Esophagus muscularis mucosa (tissue), 4 donors: ENCODE measurements at regions of chr6 and their contacts with region 1.

Region 1: DNA sequence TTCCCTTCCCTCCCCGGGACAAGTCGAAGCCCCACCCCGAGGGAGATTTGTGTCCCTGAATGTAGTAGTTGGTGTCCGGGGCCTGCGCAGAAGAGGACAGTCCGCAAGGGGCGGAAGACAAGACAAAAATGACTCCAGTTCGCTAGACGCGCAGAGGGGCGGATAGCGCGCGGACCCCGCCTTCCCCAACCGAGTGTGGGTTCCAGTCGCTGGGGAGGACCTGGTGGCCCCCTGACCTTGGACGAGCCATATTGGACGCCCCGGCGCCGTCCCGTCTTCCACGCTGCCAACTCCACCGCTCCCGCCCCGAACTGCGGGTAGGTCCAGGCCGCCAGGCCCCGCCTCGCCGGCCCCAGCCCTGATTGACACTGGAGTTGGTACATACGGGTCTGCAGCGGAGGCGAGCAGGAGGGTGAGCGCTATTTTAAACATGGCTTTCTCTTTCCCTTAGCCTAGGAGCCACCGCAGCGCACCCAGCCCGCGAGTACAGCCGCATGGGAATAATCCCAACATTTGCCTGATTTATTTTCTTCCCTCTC is 802 bp downstream of the HMGN3 start:
- DNase-seq: peak; percentile 97
- H3K4me3 ChIP-seq: peak overlapping the region; percentile 72 to 96 (median 78)
- H3K27ac ChIP-seq: peak overlapping the region; percentile 91 to 95 (median 94)
- H3K4me1 ChIP-seq: peaks cover under 1 to 26% (median 21%) of the 10 kb centered on the region in 4 donors
- H3K27me3 ChIP-seq: no peaks in the 10 kb centered on the region
- CTCF ChIP-seq: peak in 1 of 3 experiments; percentile 57
- EP300 ChIP-seq: no peak
- POLR2A ChIP-seq: no peak

Region 2: DNA sequence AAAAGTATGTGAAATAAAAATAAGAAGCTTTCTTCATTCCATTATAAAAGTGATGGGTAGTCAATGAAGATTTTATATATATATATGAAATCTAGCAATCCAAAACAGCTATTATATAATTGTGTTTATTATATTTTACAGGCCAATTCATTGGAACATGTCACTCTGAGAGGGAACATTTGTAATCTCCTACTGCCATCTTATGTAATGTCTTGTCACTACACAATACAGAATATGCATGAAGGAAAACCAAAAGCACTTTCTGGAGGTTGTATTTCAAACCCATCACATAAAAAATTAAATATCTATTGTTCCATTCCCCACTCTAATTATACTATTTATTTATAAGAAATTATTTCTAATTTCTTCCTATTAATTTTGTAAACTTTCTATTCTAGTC is 397.9 kb before region 1 on chr6:
- intact Hi-C with region 1: no loop called
- DNase-seq: no peak
- H3K4me3 ChIP-seq: no peak overlapping the region
- H3K27ac ChIP-seq: no peak overlapping the region
- H3K4me1 ChIP-seq: peaks cover 0 to 4% (median 0%) of the 10 kb centered on the region in 4 donors
- H3K27me3 ChIP-seq: no peaks in the 10 kb centered on the region
- CTCF ChIP-seq: peak in 1 of 3 experiments; percentile 6
- EP300 ChIP-seq: no peak
- POLR2A ChIP-seq: no peak

Region 3: GRCh38 chr6:79078075-79079025 is 155.3 kb before region 1 on chr6 and contains the start of gene PHIP:
- intact Hi-C with region 1: loop called (anchors 1 kb)
- DNase-seq: peak; percentile 98
- H3K4me3 ChIP-seq: peak within 1 kb of the TSS; percentile 84 to 98 (median 94)
- H3K27ac ChIP-seq: peak within 1 kb of the TSS; percentile 96 to 100 (median 98)
- H3K4me1 ChIP-seq: peaks cover 28 to 43% (median 40%) of the 10 kb centered on the region in 4 donors
- H3K27me3 ChIP-seq: no peaks in the 10 kb centered on the region
- CTCF ChIP-seq: no peak
- EP300 ChIP-seq: no peak
- POLR2A ChIP-seq: peak; percentile 24
- total RNA-seq, gene PHIP: 20.1 to 32.4 (median 25.5) TPM

Region 4: GRCh38 chr6:79536954-79537747 is 303.5 kb after region 1 on chr6 and contains the start of gene LCA5:
- intact Hi-C with region 1: loop called (anchors 5 kb)
- DNase-seq: peak; percentile 97
- H3K4me3 ChIP-seq: peak within 1 kb of the TSS; percentile 66 to 88 (median 78)
- H3K27ac ChIP-seq: peak within 1 kb of the TSS; percentile 90 to 95 (median 93)
- H3K4me1 ChIP-seq: peaks cover 8 to 36% (median 19%) of the 10 kb centered on the region in 4 donors
- H3K27me3 ChIP-seq: no peaks in the 10 kb centered on the region
- CTCF ChIP-seq: no peak
- EP300 ChIP-seq: no peak
- POLR2A ChIP-seq: no peak
- total RNA-seq, gene LCA5: 5.2 to 11.5 (median 8.5) TPM

Region 5: DNA sequence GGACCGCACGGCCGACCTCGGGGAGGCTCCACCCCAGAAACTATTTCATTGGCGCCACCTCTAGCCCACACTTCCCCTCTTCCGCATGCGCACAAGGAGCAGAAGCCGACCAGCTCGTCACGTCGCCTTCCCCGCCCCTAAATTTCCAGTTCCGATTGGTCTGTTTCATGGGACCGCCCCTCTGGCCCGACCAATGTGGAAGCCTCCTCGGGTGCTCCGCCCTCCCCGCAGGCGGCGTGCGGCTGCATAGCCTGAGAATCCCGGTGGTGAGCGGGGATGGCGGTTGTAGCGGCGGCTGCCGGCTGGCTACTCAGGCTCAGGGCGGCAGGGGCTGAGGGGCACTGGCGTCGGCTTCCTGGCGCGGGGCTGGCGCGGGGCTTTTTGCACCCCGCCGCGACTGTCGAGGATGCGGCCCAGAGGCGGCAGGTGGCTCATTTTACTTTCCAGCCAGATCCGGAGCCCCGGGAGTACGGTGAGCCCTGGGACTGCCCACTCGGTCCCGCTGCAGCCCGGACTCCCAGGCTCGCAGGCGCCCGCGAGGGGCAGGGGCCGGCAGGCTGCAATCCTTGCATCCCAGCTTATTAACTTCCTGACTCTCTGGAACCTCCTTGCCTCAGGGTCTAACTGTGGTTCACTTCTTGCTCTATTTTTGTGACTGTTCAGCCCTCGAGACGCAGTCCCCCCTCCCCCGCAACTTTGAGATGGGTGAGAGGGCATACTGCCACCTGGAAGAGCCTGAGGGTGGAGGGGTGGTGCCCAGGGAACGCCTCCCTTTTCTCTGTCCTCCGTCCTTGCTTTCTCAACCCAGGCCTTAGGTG is 872.9 kb after region 1 on chr6 and contains the start of gene BCKDHB:
- intact Hi-C with region 1: loop called (anchors 10 kb)
- DNase-seq: peak; percentile 99
- H3K4me3 ChIP-seq: peak within 1 kb of the TSS; percentile 71 to 89 (median 84)
- H3K27ac ChIP-seq: peak within 1 kb of the TSS; percentile 89 to 97 (median 94)
- H3K4me1 ChIP-seq: peaks cover 6 to 17% (median 13%) of the 10 kb centered on the region in 4 donors
- H3K27me3 ChIP-seq: no peaks in the 10 kb centered on the region
- CTCF ChIP-seq: peak in 1 of 3 experiments; percentile 20
- EP300 ChIP-seq: no peak
- POLR2A ChIP-seq: peak; percentile 61
- total RNA-seq, gene BCKDHB: 12.2 to 26.2 (median 20.6) TPM